ENCODE measurements at regions of chr13 and their contacts with region 1.

Region 1: DNA sequence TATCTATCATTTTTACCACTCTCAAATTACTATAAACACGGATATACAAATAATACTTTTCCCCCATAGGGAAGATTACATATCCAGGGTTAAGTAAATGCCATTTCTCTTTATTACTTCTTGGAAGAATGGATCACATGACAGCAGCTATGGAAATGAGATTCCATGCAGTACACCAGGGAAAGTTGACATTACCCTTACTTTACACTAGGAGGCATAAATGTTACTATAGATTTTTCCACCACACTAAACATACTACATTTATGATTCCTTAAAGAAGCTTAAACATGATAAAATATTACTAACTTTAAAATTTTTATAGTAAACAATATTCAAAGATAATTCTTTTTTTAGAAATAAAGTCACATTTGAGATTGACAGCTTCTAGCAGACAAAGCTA is 611.4 kb downstream of the PCDH9 start:
- DNase-seq: no peak
- ATAC-seq: no peak
- H3K4me3 ChIP-seq: no peak overlapping the region
- H3K4me3 Mint-ChIP-seq: no peak overlapping the region
- H3K27ac ChIP-seq: no peak overlapping the region
- H3K27ac Mint-ChIP-seq: no peak overlapping the region
- H3K4me1 ChIP-seq: no peaks in the 10 kb centered on the region
- H3K4me1 Mint-ChIP-seq: no peaks in the 10 kb centered on the region
- H3K27me3 ChIP-seq: no peaks in the 10 kb centered on the region
- H3K27me3 Mint-ChIP-seq: no peaks in the 10 kb centered on the region

Region 2: DNA sequence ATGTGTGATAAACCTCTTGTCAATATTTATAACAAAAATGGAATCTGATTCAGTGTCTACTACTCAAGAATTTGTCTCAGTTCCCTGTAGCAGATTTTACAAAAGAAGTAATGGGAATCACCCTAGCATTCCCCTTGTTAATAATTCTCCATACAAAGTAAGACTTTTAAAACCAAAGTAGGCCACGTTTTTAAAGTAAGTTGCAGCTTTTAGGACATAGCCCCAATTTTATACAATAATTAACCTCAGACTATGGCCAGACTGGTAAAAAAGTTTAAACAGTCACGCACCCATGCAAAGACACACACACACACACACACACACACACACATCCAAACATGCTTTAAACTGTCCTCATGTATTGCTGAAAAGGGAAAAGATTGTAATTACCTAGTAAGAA is 21.5 kb after region 1 on chr13:
- CTCF ChIA-PET with region 1: no interaction called
- POLR2A ChIA-PET with region 1: no interaction called
- intact Hi-C with region 1: no loop called
- DNase-seq: no peak
- ATAC-seq: no peak
- H3K4me3 ChIP-seq: no peak overlapping the region
- H3K4me3 Mint-ChIP-seq: no peak overlapping the region
- H3K27ac ChIP-seq: no peak overlapping the region
- H3K27ac Mint-ChIP-seq: no peak overlapping the region
- H3K4me1 ChIP-seq: no peaks in the 10 kb centered on the region
- H3K4me1 Mint-ChIP-seq: peaks cover 0 to 2% (median 0%) of the 10 kb centered on the region in 7 donors
- H3K27me3 ChIP-seq: no peaks in the 10 kb centered on the region
- H3K27me3 Mint-ChIP-seq: no peaks in the 10 kb centered on the region

Region 3: GRCh38 chr13:66714795-66715194 is 96.1 kb after region 1 on chr13:
- CTCF ChIA-PET with region 1: no interaction called
- POLR2A ChIA-PET with region 1: no interaction called
- intact Hi-C with region 1: no loop called
- DNase-seq: no peak
- ATAC-seq: no peak
- H3K4me3 ChIP-seq: no peak overlapping the region
- H3K4me3 Mint-ChIP-seq: no peak overlapping the region
- H3K27ac ChIP-seq: no peak overlapping the region
- H3K27ac Mint-ChIP-seq: no peak overlapping the region
- H3K4me1 ChIP-seq: no peaks in the 10 kb centered on the region
- H3K4me1 Mint-ChIP-seq: no peaks in the 10 kb centered on the region
- H3K27me3 ChIP-seq: no peaks in the 10 kb centered on the region
- H3K27me3 Mint-ChIP-seq: no peaks in the 10 kb centered on the region

Region 4: GRCh38 chr13:67224148-67224846 is 605.6 kb after region 1 on chr13:
- CTCF ChIA-PET with region 1: no interaction called
- POLR2A ChIA-PET with region 1: no interaction called
- intact Hi-C with region 1: loop called in 1 of 2 experiments (anchors 2 kb)
- DNase-seq: peak in 8 of 9 donors; percentile 40 to 73 (median 53)
- ATAC-seq: peak; percentile 79
- H3K4me3 ChIP-seq: no peak overlapping the region
- H3K4me3 Mint-ChIP-seq: peak overlapping the region in 7 of 10 donors; percentile 8 to 55 (median 26)
- H3K27ac ChIP-seq: no peak overlapping the region
- H3K27ac Mint-ChIP-seq: peak overlapping the region in 1 of 9 donors; percentile 33
- H3K4me1 ChIP-seq: peaks cover 0 to 7% of the 10 kb centered on the region in 2 donors
- H3K4me1 Mint-ChIP-seq: peaks cover 0 to 16% (median 7%) of the 10 kb centered on the region in 7 donors
- H3K27me3 ChIP-seq: no peaks in the 10 kb centered on the region
- H3K27me3 Mint-ChIP-seq: peaks cover 6 to 28% (median 13%) of the 10 kb centered on the region in 5 donors

Measured in naive thymus-derived CD4-positive, alpha-beta T cell (primary cell).